Right cardiac atrium (tissue), 5 donors: ENCODE measurements at regions of chr7 and their contacts with region 1.

Region 1: GRCh38 chr7:80018941-80019752 is 115.5 kb upstream of the GNAI1 start:
- DNase-seq: peak; percentile 24 to 40 (median 31)
- ATAC-seq: peak; percentile 52 to 61
- H3K4me3 ChIP-seq: no peak overlapping the region
- H3K27ac ChIP-seq: no peak overlapping the region
- H3K4me1 ChIP-seq: no peaks in the 10 kb centered on the region
- H3K27me3 ChIP-seq: no peaks in the 10 kb centered on the region

Region 2: DNA sequence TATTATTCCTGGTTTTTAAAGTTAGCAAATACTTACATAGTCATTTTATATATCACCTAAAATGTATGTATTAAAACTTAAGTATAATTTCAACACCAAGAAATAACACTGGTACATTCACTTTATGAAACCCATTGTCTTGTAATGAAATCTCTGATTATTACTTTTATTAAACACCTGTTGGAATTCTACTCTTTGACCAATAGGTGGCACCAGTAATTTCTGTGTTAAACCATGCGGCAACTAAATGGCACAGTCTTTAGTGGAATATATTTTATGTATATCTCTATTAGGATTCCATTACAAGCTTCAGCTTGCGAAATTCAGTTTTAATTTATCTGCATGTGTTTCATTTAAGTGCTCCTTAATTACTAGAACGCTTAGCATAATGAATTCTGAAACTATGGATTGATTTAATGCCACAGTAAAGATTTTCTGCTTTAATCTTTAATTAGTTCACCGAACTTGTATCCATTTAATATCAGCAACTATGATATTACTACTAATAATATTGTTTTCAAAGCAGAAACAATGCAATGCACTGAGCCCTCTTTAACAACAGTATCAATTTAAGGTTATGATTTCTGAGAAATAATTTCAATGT is 747.0 kb before region 1 on chr7:
- intact Hi-C with region 1: loop called in 1 of 4 experiments (anchors 10 kb)
- DNase-seq: no peak
- ATAC-seq: no peak
- H3K4me3 ChIP-seq: no peak overlapping the region
- H3K27ac ChIP-seq: no peak overlapping the region
- H3K4me1 ChIP-seq: no peaks in the 10 kb centered on the region
- H3K27me3 ChIP-seq: no peaks in the 10 kb centered on the region